Natural killer cell (primary cell): ENCODE measurements at regions of chr17 and their contacts with region 1.

Region 1: GRCh38 chr17:63842540-63843386 is at the start of gene SMARCD2:
- DNase-seq: peak; percentile 96 to 99
- ATAC-seq: peak; percentile 91 to 98 (median 91)
- H3K4me3 ChIP-seq: peak within 1 kb of the TSS; percentile 93
- H3K4me3 Mint-ChIP-seq: peak within 1 kb of the TSS; percentile 95
- H3K27ac ChIP-seq: peak within 1 kb of the TSS; percentile 95
- H3K27ac Mint-ChIP-seq: peak within 1 kb of the TSS; percentile 89 to 92
- H3K4me1 ChIP-seq: peaks cover 54% of the 10 kb centered on the region
- H3K4me1 Mint-ChIP-seq: peaks cover 30 to 47% of the 10 kb centered on the region in 2 donors
- H3K27me3 ChIP-seq: no peaks in the 10 kb centered on the region
- H3K27me3 Mint-ChIP-seq: no peaks in the 10 kb centered on the region
- CTCF ChIP-seq: no peak
- total RNA-seq, gene SMARCD2: 131 to 162 (median 139) TPM

Region 2: DNA sequence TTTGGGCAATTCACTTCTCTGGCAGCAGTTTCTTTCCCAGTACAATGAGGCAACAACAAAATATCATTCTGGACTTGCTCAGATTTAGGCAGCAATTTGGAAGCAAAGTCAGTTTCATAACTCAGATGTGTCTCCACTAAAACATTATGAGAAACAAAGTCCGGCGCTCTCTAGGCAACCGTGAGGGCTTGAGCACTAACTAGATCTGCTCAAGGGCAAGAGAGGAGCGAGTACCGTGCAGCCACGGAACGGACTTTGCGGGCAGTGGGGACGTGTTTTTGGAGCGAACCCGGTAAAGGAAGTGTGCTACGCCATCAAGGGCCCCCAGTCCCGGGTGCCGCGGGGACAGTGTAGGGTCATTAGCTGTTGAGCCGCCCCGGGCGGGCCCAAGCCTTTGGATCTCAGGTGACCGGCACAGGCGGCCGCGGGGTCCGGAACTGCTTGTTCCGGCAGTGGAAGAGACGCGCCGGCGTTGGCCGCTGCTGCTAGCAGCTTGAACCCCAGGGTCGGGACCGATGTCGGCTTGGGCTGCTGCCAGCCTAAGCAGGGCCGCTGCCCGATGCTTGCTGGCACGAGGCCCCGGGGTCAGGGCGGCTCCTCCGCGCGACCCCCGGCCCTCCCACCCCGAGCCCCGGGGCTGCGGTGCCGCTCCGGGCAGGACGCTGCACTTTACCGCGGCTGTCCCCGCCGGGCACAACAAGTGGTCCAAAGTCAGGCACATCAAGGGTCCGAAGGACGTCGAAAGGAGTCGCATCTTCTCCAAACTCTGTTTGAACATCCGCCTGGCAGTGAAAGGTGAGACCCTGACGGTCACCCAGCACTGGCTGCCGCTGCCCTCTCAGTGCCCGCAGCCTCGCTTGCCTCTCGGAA is 242.0 kb before region 1 on chr17 and contains the start of gene TACO1:
- intact Hi-C with region 1: no loop called
- DNase-seq: peak; percentile 72 to 86
- ATAC-seq: peak; percentile 80 to 88 (median 86)
- H3K4me3 ChIP-seq: peak within 1 kb of the TSS; percentile 96
- H3K4me3 Mint-ChIP-seq: peak within 1 kb of the TSS; percentile 89
- H3K27ac ChIP-seq: peak within 1 kb of the TSS; percentile 78
- H3K27ac Mint-ChIP-seq: peak within 1 kb of the TSS; percentile 75 to 88
- H3K4me1 ChIP-seq: peaks cover 31% of the 10 kb centered on the region
- H3K4me1 Mint-ChIP-seq: peaks cover 38 to 42% of the 10 kb centered on the region in 2 donors
- H3K27me3 ChIP-seq: no peaks in the 10 kb centered on the region
- H3K27me3 Mint-ChIP-seq: no peaks in the 10 kb centered on the region
- CTCF ChIP-seq: no peak
- total RNA-seq, gene TACO1: 7.1 to 10.9 (median 9.2) TPM

Region 3: GRCh38 chr17:63621766-63622519 is 220.8 kb before region 1 on chr17 and contains the start of gene MAP3K3:
- intact Hi-C with region 1: loop called (anchors 2 kb)
- DNase-seq: peak; percentile 92 to 99
- ATAC-seq: peak; percentile 88 to 97 (median 88)
- H3K4me3 ChIP-seq: peak within 1 kb of the TSS; percentile 72
- H3K4me3 Mint-ChIP-seq: peak within 1 kb of the TSS; percentile 99
- H3K27ac ChIP-seq: peak within 1 kb of the TSS; percentile 68
- H3K27ac Mint-ChIP-seq: peak within 1 kb of the TSS; percentile 83 to 91
- H3K4me1 ChIP-seq: peaks cover 13% of the 10 kb centered on the region
- H3K4me1 Mint-ChIP-seq: peaks cover 36 to 43% of the 10 kb centered on the region in 2 donors
- H3K27me3 ChIP-seq: no peaks in the 10 kb centered on the region
- H3K27me3 Mint-ChIP-seq: no peaks in the 10 kb centered on the region
- CTCF ChIP-seq: no peak
- total RNA-seq, gene MAP3K3: 82.0 to 89.2 (median 88.5) TPM

Region 4: DNA sequence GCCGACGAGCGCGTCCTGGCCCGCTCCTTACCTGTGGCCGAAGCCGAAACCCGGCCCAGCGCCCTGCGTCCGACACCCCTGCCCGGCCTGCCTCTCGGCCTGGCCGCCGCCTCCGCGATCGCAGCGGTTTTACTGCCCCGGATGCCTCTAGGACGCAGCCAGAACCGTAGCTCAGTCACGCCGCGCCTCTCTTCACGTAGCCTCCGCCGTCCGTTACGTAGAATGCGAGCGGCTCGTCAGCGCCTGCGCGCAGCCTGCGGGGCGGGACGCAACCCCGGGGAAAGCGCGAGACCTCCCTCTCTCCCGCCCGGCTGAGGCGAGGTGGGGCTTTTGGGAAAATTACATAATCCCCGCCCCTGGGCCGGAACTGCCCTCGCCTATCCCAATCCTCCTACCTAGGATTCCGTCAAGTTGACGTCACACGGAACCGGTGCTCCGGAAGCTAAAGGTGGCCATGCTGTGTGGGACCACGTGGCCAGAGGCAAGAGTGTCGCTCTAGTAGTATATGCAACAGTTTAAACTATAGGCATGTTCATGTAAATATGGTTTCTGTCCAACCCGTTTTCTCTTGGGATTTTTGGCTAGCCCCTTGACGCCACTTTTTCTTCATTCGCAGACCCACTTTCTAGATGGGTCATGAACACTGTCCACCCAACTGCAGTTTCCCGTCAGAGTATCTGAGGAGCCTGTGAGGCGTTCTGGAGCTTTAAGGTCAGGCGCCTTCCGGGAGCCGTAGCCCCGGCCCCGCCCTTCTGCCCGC is 69.2 kb before region 1 on chr17 and contains the start of gene CCDC47:
- intact Hi-C with region 1: loop called (anchors 2 kb)
- DNase-seq: peak; percentile 93 to 99
- ATAC-seq: peak; percentile 81 to 94 (median 84)
- H3K4me3 ChIP-seq: peak within 1 kb of the TSS; percentile 88
- H3K4me3 Mint-ChIP-seq: peak within 1 kb of the TSS; percentile 95
- H3K27ac ChIP-seq: peak within 1 kb of the TSS; percentile 94
- H3K27ac Mint-ChIP-seq: peak within 1 kb of the TSS; percentile 98 to 99
- H3K4me1 ChIP-seq: peaks cover 22% of the 10 kb centered on the region
- H3K4me1 Mint-ChIP-seq: peaks cover 51 to 65% of the 10 kb centered on the region in 2 donors
- H3K27me3 ChIP-seq: no peaks in the 10 kb centered on the region
- H3K27me3 Mint-ChIP-seq: no peaks in the 10 kb centered on the region
- CTCF ChIP-seq: no peak
- total RNA-seq, gene CCDC47: 37.9 to 45.2 (median 41.7) TPM

Region 5: GRCh38 chr17:63827002-63827771 is 15.6 kb before region 1 on chr17 and contains the starts of genes FTSJ3 and PSMC5:
- intact Hi-C with region 1: loop called (anchors 1 kb)
- DNase-seq: peak; percentile 89 to 98
- ATAC-seq: peak; percentile 89 to 97 (median 93)
- H3K4me3 ChIP-seq: peak within 1 kb of the TSS; percentile 78
- H3K4me3 Mint-ChIP-seq: peak within 1 kb of the TSS; percentile 99
- H3K27ac ChIP-seq: peak within 1 kb of the TSS; percentile 91
- H3K27ac Mint-ChIP-seq: peak within 1 kb of the TSS; percentile 96 to 99
- H3K4me1 ChIP-seq: peaks cover 35% of the 10 kb centered on the region
- H3K4me1 Mint-ChIP-seq: peaks cover 30 to 55% of the 10 kb centered on the region in 2 donors
- H3K27me3 ChIP-seq: no peaks in the 10 kb centered on the region
- H3K27me3 Mint-ChIP-seq: no peaks in the 10 kb centered on the region
- CTCF ChIP-seq: peak; percentile 47
- total RNA-seq, gene FTSJ3: 35.2 to 53.5 (median 51.6) TPM
- total RNA-seq, gene PSMC5: 91.3 to 114 (median 100) TPM

Region 6: DNA sequence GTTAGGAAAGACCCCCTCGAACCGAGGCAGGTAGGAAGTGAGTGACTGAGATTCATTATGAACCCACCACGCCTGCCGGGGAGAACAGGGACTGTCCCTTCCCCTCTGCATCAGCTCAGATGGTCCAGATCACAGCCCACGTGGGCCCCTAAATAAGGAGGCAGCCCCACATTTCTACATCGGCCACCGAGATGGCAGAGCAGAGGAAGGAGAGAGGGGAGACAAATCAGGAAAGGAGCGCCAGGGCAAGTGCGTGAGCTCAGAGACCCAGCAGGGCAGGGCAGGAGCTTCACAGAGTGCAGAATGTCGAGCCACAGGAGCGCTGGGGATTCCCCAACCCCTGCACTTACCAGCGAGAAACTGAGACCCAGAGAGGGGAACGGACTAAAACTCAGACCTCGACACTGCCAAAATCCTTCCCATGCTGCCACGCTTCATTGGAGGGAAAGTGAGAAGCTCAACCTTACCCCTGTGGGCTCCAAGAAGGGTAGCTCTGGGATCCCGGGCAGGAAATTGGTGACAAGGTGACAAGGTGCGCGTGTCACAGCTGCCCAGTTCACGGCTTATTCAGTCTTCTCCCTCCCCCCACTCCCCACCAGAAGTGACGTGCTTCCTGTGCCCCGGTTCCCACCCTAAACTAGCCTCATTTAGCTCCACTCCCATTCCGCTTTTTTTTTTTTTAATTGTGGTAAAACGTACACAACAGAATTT is 177.4 kb after region 1 on chr17 and contains the start of gene ICAM2:
- intact Hi-C with region 1: loop called (anchors 5 kb)
- DNase-seq: peak; percentile 85 to 99
- ATAC-seq: peak; percentile 66 to 89 (median 74)
- H3K4me3 ChIP-seq: peak within 1 kb of the TSS; percentile 55
- H3K4me3 Mint-ChIP-seq: peak within 1 kb of the TSS; percentile 98
- H3K27ac ChIP-seq: peak within 1 kb of the TSS; percentile 91
- H3K27ac Mint-ChIP-seq: peak within 1 kb of the TSS; percentile 94 to 100
- H3K4me1 ChIP-seq: peaks cover 73% of the 10 kb centered on the region
- H3K4me1 Mint-ChIP-seq: peaks cover 73 to 74% of the 10 kb centered on the region in 2 donors
- H3K27me3 ChIP-seq: no peaks in the 10 kb centered on the region
- H3K27me3 Mint-ChIP-seq: no peaks in the 10 kb centered on the region
- CTCF ChIP-seq: no peak
- total RNA-seq, gene ICAM2: 73.2 to 91.0 (median 78.0) TPM

Region 7: DNA sequence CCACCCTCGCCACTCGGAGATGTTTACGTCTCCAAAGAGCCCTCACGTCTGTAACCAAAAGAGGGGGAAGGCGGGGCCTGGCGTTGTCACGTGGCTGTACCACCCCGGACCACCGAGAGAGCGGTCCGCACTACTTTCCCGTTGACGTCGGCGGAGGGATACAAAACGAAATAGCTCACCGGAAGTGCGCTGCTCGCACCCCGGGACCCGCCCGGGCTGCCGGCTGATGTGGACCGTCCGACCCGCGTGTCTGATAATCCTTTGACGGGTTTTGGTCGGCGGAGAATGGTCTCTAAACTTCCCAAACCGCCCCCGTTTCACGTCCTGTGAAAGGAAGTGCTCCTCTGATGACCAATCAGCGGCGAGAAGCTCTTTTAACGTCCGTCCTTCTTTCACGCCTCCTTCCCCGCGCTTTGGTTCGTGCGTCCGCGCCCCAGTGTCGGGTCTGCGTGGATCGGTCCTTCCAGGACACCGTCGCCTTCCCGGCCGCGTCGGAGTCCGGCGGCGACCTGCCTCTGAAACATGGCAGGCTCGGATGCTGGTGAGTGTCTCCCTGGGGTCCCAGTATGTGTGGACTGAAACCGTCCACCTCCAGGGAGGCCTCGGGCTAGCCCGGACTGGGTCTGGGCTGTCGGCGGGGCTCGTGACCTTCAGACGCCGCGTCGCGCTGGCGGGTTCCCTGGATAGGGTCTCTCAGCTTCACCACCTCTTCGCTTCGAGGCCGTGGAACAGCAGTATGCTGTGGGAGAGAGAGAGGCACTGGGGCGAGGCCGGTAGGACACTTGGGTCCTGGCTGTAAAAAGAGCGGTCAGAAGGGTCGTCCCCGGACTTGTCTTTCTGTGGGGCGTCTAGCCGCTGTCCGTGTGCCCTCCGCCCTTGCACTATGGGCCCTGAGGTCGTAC is 664.1 kb after region 1 on chr17 and contains the start of gene CEP95:
- intact Hi-C with region 1: loop called (anchors 2 kb)
- DNase-seq: peak; percentile 95 to 98
- ATAC-seq: peak; percentile 58 to 83 (median 72)
- H3K4me3 ChIP-seq: peak within 1 kb of the TSS; percentile 85
- H3K4me3 Mint-ChIP-seq: peak within 1 kb of the TSS; percentile 95
- H3K27ac ChIP-seq: peak within 1 kb of the TSS; percentile 94
- H3K27ac Mint-ChIP-seq: peak within 1 kb of the TSS; percentile 97 to 99
- H3K4me1 ChIP-seq: peaks cover 12% of the 10 kb centered on the region
- H3K4me1 Mint-ChIP-seq: peaks cover 62 to 67% of the 10 kb centered on the region in 2 donors
- H3K27me3 ChIP-seq: no peaks in the 10 kb centered on the region
- H3K27me3 Mint-ChIP-seq: no peaks in the 10 kb centered on the region
- CTCF ChIP-seq: no peak
- total RNA-seq, gene CEP95: 152 to 187 (median 186) TPM